ENCODE measurements at regions of chr1 and their contacts with region 1.

Region 1: DNA sequence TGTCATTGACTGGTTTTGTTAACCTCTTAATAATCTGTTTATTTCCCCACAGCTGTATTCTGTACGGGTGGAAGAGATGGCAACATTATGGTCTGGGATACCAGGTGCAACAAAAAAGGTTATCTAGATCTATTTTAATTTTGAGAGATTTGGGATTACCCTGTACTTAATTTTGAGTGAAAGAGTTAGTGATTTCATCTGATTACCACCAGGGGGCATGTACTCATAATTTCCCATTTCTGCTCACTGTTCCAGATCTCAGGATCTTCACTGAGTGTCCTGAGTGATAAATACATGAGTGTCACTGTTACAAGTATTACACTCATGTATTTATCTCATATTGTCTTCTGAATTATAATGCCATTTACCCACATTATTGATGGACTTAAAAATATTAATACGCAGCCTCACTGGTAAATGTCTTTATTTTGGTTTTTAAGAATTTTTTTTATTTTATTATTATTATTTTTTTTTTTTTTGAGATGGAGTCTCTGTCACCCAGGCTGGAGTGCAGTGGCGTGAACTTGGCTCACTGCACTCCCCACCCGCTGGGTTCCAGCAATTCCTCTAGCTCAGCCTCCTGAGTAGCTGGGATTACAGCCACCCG is 27.4 kb downstream of the DTL start:
- DNase-seq: peak; percentile 41 to 55
- ATAC-seq: peak; percentile 73 to 89
- H3K4me3 ChIP-seq: no peak overlapping the region
- H3K27ac ChIP-seq: no peak overlapping the region
- H3K4me1 ChIP-seq: no peaks in the 10 kb centered on the region
- CTCF ChIP-seq: peak; percentile 80
- EP300 ChIP-seq: no peak
- POLR2A ChIP-seq: no peak
- RAD21 ChIP-seq: peak; percentile 46 to 60

Region 2: GRCh38 chr1:212291505-212292134 is 228.7 kb after region 1 on chr1:
- CTCF ChIA-PET with region 1: interaction called, 20 read pairs
- POLR2A ChIA-PET with region 1: no interaction called
- DNase-seq: peak; percentile 44 to 66
- ATAC-seq: peak; percentile 81 to 85
- H3K4me3 ChIP-seq: no peak overlapping the region
- H3K27ac ChIP-seq: 0 out of 6 replicates have a peak overlapping the region, but pooled peaks of 1 of the 2 experiments have one; percentile 32
- H3K4me1 ChIP-seq: peaks cover 45% of the 10 kb centered on the region
- CTCF ChIP-seq: peak; percentile 69
- EP300 ChIP-seq: no peak
- POLR2A ChIP-seq: no peak
- RAD21 ChIP-seq: peak; percentile 77 to 82

Region 3: DNA sequence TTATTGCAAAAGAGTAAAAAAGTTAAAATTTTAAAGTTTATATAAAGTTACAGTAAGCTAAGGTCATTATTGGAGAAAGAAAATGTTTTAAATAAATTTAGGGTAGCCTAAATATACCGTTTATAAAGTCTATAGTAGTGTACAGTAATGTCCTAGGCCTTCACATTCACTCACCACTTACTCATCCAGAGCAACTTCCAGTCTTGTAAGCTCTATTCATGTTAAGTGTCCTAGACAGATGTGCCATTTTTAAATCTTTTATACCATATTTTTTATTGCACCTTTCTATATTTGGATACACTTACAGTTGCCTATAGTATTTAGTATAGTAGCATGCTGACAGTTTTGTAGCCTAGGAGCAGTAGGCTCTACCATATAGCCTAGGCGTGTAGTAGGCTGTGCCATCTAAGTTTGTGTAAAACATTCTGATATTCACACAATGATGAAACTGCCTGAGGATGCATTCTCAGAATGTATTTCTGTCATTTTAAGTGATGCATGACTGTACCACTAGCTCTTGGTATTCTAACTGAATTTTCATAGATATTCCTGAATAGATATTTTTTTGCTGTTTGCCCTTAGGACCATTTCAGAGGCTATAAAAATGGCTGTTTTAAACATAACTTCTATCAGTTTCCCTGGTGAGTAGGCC is 249.0 kb after region 1 on chr1:
- CTCF ChIA-PET with region 1: interaction called, 10 read pairs
- POLR2A ChIA-PET with region 1: no interaction called
- DNase-seq: no peak
- ATAC-seq: no peak
- H3K4me3 ChIP-seq: no peak overlapping the region
- H3K27ac ChIP-seq: no peak overlapping the region
- H3K4me1 ChIP-seq: peaks cover 9% of the 10 kb centered on the region; the same call in 1 of the 3 replicates
- CTCF ChIP-seq: no peak
- EP300 ChIP-seq: no peak
- POLR2A ChIP-seq: no peak
- RAD21 ChIP-seq: no peak

Region 4: GRCh38 chr1:212368073-212368484 is 305.1 kb after region 1 on chr1:
- CTCF ChIA-PET with region 1: interaction called, 80 read pairs
- POLR2A ChIA-PET with region 1: no interaction called
- DNase-seq: peak; percentile 54 to 74
- ATAC-seq: peak; percentile 97 to 98
- H3K4me3 ChIP-seq: no peak overlapping the region
- H3K27ac ChIP-seq: no peak overlapping the region
- H3K4me1 ChIP-seq: no peaks in the 10 kb centered on the region
- CTCF ChIP-seq: peak; percentile 76
- EP300 ChIP-seq: no peak
- POLR2A ChIP-seq: no peak
- RAD21 ChIP-seq: peak; percentile 78 to 83